ENCODE measurements at regions of chr1 and their contacts with region 1.

Region 1: GRCh38 chr1:67713057-67713846 is 28.3 kb downstream of the GADD45A start:
- DNase-seq: peak in 3 of 4 experiments; percentile 28 to 81 (median 61)
- ATAC-seq: peak; percentile 60
- H3K4me3 ChIP-seq: no peak overlapping the region
- H3K27ac ChIP-seq: peak overlapping the region; percentile 70
- H3K4me1 ChIP-seq: peaks cover 26 to 52% of the 10 kb centered on the region in 2 experiments
- H3K27me3 ChIP-seq: no peaks in the 10 kb centered on the region
- CTCF ChIP-seq: no peak
- EP300 ChIP-seq: no peak
- POLR2A ChIP-seq: no peak
- RAD21 ChIP-seq: no peak

Region 2: DNA sequence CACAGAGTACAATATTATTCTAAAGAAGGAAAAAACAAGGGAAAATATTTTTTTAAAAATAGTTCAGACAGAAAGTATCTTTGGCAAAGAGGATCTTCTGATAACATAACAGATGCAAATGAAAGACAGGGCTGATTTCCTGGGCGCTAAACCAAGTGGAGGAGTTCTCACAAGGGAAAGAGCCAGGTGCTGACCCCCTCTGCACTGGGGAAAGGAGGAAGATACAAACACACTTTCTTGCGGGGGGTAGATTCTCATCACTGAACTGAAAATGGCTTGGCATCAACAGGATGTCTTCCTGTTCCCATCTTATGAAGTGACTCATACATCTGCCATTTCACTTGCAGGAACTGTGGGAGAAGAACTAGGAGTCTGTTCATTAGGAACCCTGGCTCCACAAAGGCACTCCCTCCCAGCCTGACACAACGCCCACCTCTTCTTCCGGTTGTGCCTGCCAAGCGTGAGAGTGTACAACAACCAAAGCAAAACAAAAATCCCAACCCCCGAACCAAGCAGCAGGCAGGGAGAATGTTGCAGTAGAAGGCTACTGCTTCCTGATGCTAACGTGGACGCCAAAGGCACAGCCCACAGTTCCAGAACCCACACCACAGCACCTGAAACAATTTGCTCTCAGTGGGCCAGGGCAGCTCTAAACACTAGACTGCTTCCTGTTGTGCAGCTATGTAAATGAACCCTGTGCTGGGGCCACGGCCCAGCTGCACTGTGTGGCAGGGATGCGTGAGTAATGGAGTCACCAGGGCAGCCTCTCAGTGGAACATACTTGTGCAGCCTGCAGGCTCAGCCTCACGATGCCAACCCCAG is 22.8 kb after region 1 on chr1:
- CTCF ChIA-PET with region 1: no interaction called
- POLR2A ChIA-PET with region 1: interaction called, 8 read pairs
- in situ Hi-C with region 1: no loop called
- intact Hi-C with region 1: loop called (anchors 1 kb)
- DNase-seq: peak in 3 of 4 experiments; percentile 56 to 70 (median 66)
- ATAC-seq: no peak
- H3K4me3 ChIP-seq: no peak overlapping the region
- H3K27ac ChIP-seq: peak overlapping the region; percentile 72
- H3K4me1 ChIP-seq: peaks cover 43 to 72% of the 10 kb centered on the region in 2 experiments
- H3K27me3 ChIP-seq: no peaks in the 10 kb centered on the region
- CTCF ChIP-seq: no peak
- EP300 ChIP-seq: peak; percentile 4; the same call in 1 of the 2 replicates
- POLR2A ChIP-seq: no peak
- RAD21 ChIP-seq: no peak

Region 3: DNA sequence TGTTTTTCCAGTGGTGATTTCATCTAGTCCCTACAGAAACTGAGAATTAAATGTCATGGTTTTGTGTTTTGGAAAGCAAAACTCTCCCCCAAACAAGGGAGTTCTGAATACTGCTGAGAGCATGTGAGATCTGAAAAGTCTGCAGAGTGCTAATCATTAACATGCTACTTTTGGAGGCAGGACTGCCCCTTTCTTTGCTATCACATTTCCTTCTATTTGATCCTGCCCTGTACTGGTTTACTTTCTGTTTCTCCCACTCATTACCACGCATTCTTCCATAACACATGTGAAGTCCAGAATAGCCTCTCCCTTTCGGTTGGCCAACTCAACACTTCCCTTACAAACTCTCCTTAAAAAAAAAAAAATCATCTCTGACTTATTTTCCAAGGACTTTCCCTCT is 35.4 kb after region 1 on chr1:
- CTCF ChIA-PET with region 1: no interaction called
- POLR2A ChIA-PET with region 1: no interaction called
- in situ Hi-C with region 1: no loop called
- intact Hi-C with region 1: loop called (anchors 2 kb)
- DNase-seq: no peak
- ATAC-seq: peak; percentile 34
- H3K4me3 ChIP-seq: no peak overlapping the region
- H3K27ac ChIP-seq: no peak overlapping the region; the same call in 2 of the 3 replicates
- H3K4me1 ChIP-seq: peaks cover 11 to 41% of the 10 kb centered on the region in 2 experiments
- H3K27me3 ChIP-seq: no peaks in the 10 kb centered on the region
- CTCF ChIP-seq: no peak
- EP300 ChIP-seq: no peak
- POLR2A ChIP-seq: no peak
- RAD21 ChIP-seq: peak in 1 of 2 experiments; percentile 15; a peak in 1 of 4 replicates

Region 4: GRCh38 chr1:67760030-67760821 is 47.0 kb after region 1 on chr1:
- CTCF ChIA-PET with region 1: no interaction called
- POLR2A ChIA-PET with region 1: no interaction called
- in situ Hi-C with region 1: no loop called
- intact Hi-C with region 1: loop called (anchors 2 kb)
- DNase-seq: peak; percentile 75 to 84 (median 76)
- ATAC-seq: peak; percentile 89
- H3K4me3 ChIP-seq: no peak overlapping the region
- H3K27ac ChIP-seq: peak overlapping the region; percentile 52
- H3K4me1 ChIP-seq: peaks cover 3 to 18% of the 10 kb centered on the region in 2 experiments; a peak in 4 of 5 replicates
- H3K27me3 ChIP-seq: no peaks in the 10 kb centered on the region
- CTCF ChIP-seq: peak; percentile 76 to 92 (median 84)
- EP300 ChIP-seq: 0 out of 2 replicates have a peak, but pooled peaks have one; percentile 14
- POLR2A ChIP-seq: no peak
- RAD21 ChIP-seq: peak; percentile 90 to 98

Measured in K562 (cell line).